Ascending aorta (tissue), 2 donors: ENCODE measurements at regions of chr1 and their contacts with region 1.

Region 1: GRCh38 chr1:154419620-154420571 is 14.8 kb downstream of the IL6R start:
- DNase-seq: peak; percentile 96 to 98
- H3K4me3 ChIP-seq: peak overlapping the region; percentile 38 to 49
- H3K27ac ChIP-seq: peak overlapping the region; percentile 91 to 93
- H3K4me1 ChIP-seq: peaks cover 22 to 49% of the 10 kb centered on the region in 2 donors
- H3K27me3 ChIP-seq: no peaks in the 10 kb centered on the region
- CTCF ChIP-seq: no peak

Region 2: GRCh38 chr1:154431586-154432373 is 11.9 kb after region 1 on chr1:
- intact Hi-C with region 1: loop called (anchors 1 kb)
- DNase-seq: peak; percentile 68 to 76
- H3K4me3 ChIP-seq: no peak overlapping the region
- H3K27ac ChIP-seq: no peak overlapping the region
- H3K4me1 ChIP-seq: peaks cover 0 to 21% of the 10 kb centered on the region in 2 donors
- H3K27me3 ChIP-seq: no peaks in the 10 kb centered on the region
- CTCF ChIP-seq: no peak